Activated B cell treated with CpG ODN at 0.5 μM for 24 hours (primary cell): ENCODE measurements at regions of chr11 and their contacts with region 1.

Region 1: DNA sequence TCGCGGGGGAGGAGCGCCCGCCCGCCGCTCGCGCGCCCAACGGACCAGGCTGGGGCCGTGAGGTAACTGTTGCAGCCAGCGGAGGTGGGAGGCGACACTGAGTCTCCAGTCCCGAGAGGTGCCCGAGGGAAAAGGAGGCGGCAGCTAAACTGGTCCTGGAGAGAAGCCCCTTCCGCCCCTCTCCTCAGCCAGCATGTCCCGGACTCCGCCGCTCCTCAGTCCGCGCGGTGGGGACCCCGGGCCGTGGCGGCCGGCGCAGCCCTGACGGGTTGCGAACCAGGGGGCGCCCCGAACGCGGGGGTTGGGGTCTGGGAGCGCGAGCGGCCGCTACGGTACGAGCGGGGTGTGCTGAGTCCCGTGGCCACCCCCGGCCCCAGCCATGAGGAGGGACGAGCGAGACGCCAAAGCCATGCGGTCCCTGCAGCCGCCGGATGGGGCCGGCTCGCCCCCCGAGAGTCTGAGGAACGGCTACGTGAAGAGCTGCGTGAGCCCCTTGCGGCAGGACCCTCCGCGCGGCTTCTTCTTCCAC is at the start of gene PDE3B:
- DNase-seq: peak; percentile 56
- ATAC-seq: peak; percentile 72
- H3K4me3 Mint-ChIP-seq: peak within 1 kb of the TSS; percentile 86
- H3K27ac Mint-ChIP-seq: no peak within 1 kb of the TSS
- H3K4me1 Mint-ChIP-seq: peaks cover 10% of the 10 kb centered on the region
- H3K27me3 Mint-ChIP-seq: peaks cover 17% of the 10 kb centered on the region
- CTCF ChIP-seq: no peak
- total RNA-seq, gene PDE3B: 11.3 and 13.4 TPM in 2 replicates

Region 2: GRCh38 chr11:14089690-14090462 is 553.9 kb before region 1 on chr11:
- CTCF ChIA-PET with region 1: no interaction called
- POLR2A ChIA-PET with region 1: no interaction called
- intact Hi-C with region 1: no loop called
- DNase-seq: no peak
- ATAC-seq: no peak
- H3K4me3 Mint-ChIP-seq: no peak overlapping the region
- H3K27ac Mint-ChIP-seq: no peak overlapping the region
- H3K4me1 Mint-ChIP-seq: no peaks in the 10 kb centered on the region
- H3K27me3 Mint-ChIP-seq: peaks cover 23% of the 10 kb centered on the region
- CTCF ChIP-seq: no peak

Region 3: DNA sequence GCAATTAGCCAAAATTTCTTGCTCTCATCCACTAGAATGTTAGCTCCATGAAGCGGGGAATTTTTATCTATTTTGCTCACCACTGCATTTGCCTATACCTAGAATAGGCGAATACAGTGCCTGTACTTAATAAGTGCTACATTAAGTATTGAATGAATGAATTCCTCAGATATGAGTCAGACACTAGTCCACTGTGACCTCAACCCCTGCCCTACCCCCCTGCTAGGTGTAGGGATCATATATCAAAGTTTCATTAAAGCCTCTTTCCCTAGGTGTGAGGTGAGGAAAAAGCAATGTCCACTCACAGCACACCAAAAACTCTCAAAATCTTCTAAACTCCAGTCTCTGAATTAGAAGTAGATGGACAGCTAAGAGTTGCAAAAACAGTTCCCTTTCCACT is 113.8 kb before region 1 on chr11:
- CTCF ChIA-PET with region 1: no interaction called
- POLR2A ChIA-PET with region 1: no interaction called
- intact Hi-C with region 1: no loop called
- DNase-seq: no peak
- ATAC-seq: no peak
- H3K4me3 Mint-ChIP-seq: no peak overlapping the region
- H3K27ac Mint-ChIP-seq: no peak overlapping the region
- H3K4me1 Mint-ChIP-seq: no peaks in the 10 kb centered on the region
- H3K27me3 Mint-ChIP-seq: no peaks in the 10 kb centered on the region
- CTCF ChIP-seq: no peak

Region 4: DNA sequence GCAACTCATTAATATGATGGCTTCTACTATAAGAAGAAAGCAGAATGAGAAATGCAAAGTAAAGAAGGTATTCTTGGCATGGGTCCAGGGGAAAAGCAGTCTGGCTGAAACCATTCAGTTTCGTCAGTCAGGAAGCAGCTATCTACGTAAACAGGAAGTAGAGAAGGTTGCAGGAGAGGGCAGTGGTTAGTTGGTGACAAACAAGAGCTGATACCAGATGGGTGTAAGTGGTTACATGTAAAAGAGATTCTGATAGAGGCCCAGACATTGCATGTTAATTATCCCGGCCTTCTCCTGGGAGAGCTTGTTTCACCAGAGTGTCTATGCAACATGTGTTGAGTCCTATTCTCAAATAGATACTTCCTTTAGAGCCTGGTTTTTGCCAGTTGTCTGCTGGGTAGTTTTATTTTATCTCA is 65.2 kb before region 1 on chr11:
- CTCF ChIA-PET with region 1: interaction called, 3 read pairs
- POLR2A ChIA-PET with region 1: interaction called, 15 read pairs
- intact Hi-C with region 1: loop called (anchors 5 kb)
- DNase-seq: no peak
- ATAC-seq: peak; percentile 94
- H3K4me3 Mint-ChIP-seq: peak overlapping the region; percentile 50
- H3K27ac Mint-ChIP-seq: peak overlapping the region; percentile 77
- H3K4me1 Mint-ChIP-seq: peaks cover 33% of the 10 kb centered on the region
- H3K27me3 Mint-ChIP-seq: peaks cover 1% of the 10 kb centered on the region
- CTCF ChIP-seq: no peak

Region 5: GRCh38 chr11:14698771-14699170 is 55.0 kb after region 1 on chr11:
- CTCF ChIA-PET with region 1: no interaction called
- POLR2A ChIA-PET with region 1: no interaction called
- intact Hi-C with region 1: no loop called
- DNase-seq: no peak
- ATAC-seq: no peak
- H3K4me3 Mint-ChIP-seq: no peak overlapping the region
- H3K27ac Mint-ChIP-seq: no peak overlapping the region
- H3K4me1 Mint-ChIP-seq: peaks cover 5% of the 10 kb centered on the region
- H3K27me3 Mint-ChIP-seq: peaks cover 4% of the 10 kb centered on the region
- CTCF ChIP-seq: no peak

Region 6: GRCh38 chr11:15199693-15200092 is 555.9 kb after region 1 on chr11:
- CTCF ChIA-PET with region 1: no interaction called
- POLR2A ChIA-PET with region 1: no interaction called
- intact Hi-C with region 1: no loop called
- DNase-seq: no peak
- ATAC-seq: no peak
- H3K4me3 Mint-ChIP-seq: no peak overlapping the region
- H3K27ac Mint-ChIP-seq: no peak overlapping the region
- H3K4me1 Mint-ChIP-seq: no peaks in the 10 kb centered on the region
- H3K27me3 Mint-ChIP-seq: no peaks in the 10 kb centered on the region
- CTCF ChIP-seq: no peak